ENCODE measurements at regions of chr5 and their contacts with region 1.

Region 1: GRCh38 chr5:90438100-90438499 is 28.5 kb upstream of the CETN3 start:
- DNase-seq: no peak
- H3K4me3 ChIP-seq: no peak overlapping the region
- H3K27me3 ChIP-seq: no peaks in the 10 kb centered on the region
- CTCF ChIP-seq: no peak

Region 2: DNA sequence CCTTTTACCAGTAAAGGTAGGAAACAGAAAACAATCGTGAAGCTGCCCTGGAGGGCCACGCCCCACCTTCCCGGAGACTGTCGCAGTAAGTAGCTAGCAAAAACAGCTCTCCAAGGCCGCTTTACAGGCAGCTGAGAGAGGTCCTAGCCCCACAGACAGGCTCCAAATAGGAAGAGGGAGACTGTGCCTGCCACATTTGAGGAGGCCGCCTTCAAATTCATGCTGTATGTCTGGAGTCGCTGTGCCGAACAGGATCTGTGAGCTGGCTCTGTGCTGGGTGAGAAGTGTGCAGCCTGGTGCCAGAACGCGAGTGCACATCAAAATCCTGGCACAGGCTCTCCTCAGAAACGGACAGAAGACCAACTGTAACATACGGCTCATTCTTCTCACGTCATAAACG is 610.7 kb before region 1 on chr5:
- CTCF ChIA-PET with region 1: no interaction called
- POLR2A ChIA-PET with region 1: no interaction called
- DNase-seq: no peak
- H3K4me3 ChIP-seq: no peak overlapping the region
- H3K27me3 ChIP-seq: no peaks in the 10 kb centered on the region
- CTCF ChIP-seq: no peak

Region 3: GRCh38 chr5:90409318-90410177 is 28.6 kb before region 1 on chr5 and contains the start of gene CETN3:
- CTCF ChIA-PET with region 1: no interaction called
- POLR2A ChIA-PET with region 1: no interaction called
- DNase-seq: peak; percentile 65
- H3K4me3 ChIP-seq: peak within 1 kb of the TSS; percentile 88
- H3K27me3 ChIP-seq: no peaks in the 10 kb centered on the region
- CTCF ChIP-seq: no peak
- polyA plus RNA-seq, gene CETN3: 2.2 and 9.3 TPM in 2 replicates

Region 4: DNA sequence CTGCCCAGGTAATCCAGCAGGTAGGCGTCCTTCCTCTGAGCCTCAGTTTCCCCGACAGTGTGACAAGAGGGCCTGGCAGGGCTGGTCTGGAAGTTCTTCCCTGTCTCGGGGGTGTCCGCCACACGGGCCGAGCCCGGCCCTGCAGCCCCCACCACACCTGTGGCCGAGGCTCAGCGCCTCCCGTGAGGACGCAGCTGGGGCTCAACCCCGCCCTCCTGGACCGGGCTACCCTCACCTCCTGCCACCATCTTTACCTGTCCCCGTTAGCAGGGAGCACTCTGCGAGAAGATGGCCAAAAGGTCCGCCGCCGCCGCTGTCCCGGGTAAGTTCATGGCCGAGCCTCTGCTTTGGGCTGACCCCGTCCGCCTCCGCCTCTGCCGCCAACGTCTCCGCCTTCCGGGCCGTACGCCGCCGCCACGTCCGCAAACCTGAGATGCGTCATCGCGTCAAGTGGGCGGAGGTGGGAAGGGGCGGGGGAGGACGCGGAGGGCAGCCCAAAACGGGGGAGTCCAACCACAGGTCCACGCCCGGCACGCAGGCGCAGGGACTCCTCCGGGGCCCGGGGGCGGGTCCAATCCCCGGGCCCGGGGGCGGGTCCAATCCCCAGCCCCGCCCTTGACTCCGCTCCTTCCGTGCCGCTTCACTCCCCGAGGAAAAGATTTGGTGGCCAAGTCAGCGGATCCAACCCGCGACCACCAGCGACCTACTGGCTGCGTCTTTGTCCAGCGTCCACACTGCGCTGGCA is 91.3 kb after region 1 on chr5 and contains the start of gene LYSMD3:
- CTCF ChIA-PET with region 1: interaction called, 44 read pairs
- POLR2A ChIA-PET with region 1: no interaction called
- DNase-seq: peak; percentile 74
- H3K4me3 ChIP-seq: peak within 1 kb of the TSS; percentile 93
- H3K27me3 ChIP-seq: peaks cover 6% of the 10 kb centered on the region
- CTCF ChIP-seq: no peak
- polyA plus RNA-seq, gene LYSMD3: 5.5 and 13.2 TPM in 2 replicates

Region 5: DNA sequence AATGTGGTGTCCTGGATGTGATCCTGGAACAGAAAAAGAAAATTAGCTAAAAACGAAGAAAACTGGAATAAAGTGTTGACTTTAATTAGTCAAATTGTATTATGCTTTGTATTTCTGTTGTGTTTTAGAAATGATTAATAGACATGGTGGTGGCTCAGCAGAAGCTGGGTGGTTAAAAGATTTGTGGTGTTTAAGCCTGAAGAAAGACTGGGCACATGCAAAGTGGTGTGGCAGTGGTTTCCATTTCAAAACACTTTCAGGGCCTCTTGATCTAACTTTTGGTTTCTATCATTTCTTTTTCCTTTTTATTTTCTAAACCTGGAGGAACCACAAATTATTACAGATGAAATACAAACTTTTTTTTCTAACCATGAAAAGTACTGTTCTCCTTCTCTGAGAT is 164.6 kb after region 1 on chr5:
- CTCF ChIA-PET with region 1: interaction called, 22 read pairs
- POLR2A ChIA-PET with region 1: no interaction called
- DNase-seq: no peak
- H3K4me3 ChIP-seq: no peak overlapping the region
- H3K27me3 ChIP-seq: no peaks in the 10 kb centered on the region
- CTCF ChIP-seq: no peak

Region 6: GRCh38 chr5:90866915-90867731 is 429.0 kb after region 1 on chr5:
- CTCF ChIA-PET with region 1: no interaction called
- POLR2A ChIA-PET with region 1: no interaction called
- DNase-seq: no peak
- H3K4me3 ChIP-seq: no peak overlapping the region
- H3K27me3 ChIP-seq: no peaks in the 10 kb centered on the region
- CTCF ChIP-seq: no peak

Region 7: DNA sequence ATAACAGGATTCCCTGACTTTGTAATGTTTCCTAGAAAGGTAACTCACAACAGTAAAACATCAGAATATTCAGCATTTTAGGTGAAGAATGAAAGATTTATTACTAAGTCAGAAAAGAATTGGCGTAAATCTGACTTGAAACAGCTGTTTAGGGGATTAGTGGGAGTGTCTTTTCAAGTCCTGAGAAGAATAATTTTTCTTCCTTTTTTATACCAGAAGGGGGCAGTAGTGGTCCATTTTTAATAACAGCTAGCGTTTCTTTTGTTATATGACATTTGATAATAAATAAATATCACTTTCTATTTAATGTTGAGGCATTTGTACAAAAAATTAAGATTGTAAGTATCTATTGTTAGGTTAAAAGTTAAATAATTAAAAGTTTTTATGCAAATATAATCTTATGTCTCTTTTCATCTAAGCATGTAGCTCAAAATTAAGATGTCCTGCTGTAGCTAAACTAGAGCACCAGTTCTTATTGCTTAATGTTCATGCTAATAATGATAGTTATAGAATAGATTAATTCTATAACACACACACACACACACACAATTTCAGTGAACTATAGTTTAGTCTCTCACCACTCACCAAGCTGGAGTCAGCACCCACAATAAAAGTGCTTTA is 1203.7 kb after region 1 on chr5:
- CTCF ChIA-PET with region 1: no interaction called
- POLR2A ChIA-PET with region 1: no interaction called
- DNase-seq: peak; percentile 4
- H3K4me3 ChIP-seq: no peak overlapping the region
- H3K27me3 ChIP-seq: no peaks in the 10 kb centered on the region
- CTCF ChIP-seq: peak; percentile 41; the same call in 1 of the 2 replicates